Heart left ventricle (tissue), 16 donors: ENCODE measurements at regions of chr7 and their contacts with region 1.

Region 1: GRCh38 chr7:64574540-64575126 is 11.8 kb upstream of the ZNF680 start:
- DNase-seq: peak; percentile 48 to 85 (median 73)
- ATAC-seq: peak; percentile 84 to 95 (median 90)
- H3K4me3 ChIP-seq: peak overlapping the region; percentile 3 to 63 (median 41)
- H3K27ac ChIP-seq: no peak overlapping the region
- H3K4me1 ChIP-seq: peaks cover 0 to 16% (median 3%) of the 10 kb centered on the region in 12 donors
- H3K27me3 ChIP-seq: peaks cover 0 to 7% (median 0%) of the 10 kb centered on the region in 9 donors
- CTCF ChIP-seq: no peak
- POLR2A ChIP-seq: no peak

Region 2: DNA sequence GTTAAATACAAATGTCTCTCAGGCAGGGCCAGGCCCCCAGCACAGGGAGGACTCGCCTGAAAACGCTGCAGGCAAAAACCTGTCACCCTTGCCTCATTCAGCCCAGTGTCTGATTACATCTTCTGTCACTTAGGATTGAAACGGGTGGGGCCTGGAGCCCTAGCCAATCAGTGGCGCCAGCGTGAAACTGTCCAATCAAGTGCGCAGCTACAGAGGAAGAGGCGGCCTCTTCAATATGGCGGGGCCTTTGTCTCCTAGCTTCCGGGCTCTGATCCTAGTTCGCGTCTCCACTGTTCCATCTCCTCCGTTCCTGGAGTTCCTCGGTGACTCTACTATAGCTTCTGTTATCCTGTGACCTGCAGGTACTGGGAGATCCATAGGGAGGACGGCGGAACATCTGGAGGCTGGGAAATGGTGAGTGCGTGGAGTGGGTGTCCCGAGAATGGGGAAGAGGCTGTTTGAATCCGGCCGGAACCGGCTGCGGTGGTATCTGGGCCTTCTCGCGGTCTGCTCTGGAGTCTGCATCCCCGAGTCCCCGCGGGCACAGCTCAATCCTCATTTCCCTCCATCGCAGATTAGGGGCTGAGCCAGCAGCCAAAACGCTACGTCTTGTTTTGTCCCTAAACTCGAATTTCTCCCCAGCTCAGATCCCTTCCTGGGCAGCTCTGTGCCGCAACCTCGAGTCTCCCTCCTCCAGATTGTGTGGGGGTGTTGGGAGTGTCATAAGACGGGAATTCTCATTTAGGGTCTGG is 260.7 kb before region 1 on chr7 and contains the start of gene ZNF736:
- intact Hi-C with region 1: loop called in 4 of 10 experiments (anchors 5 to 10 kb)
- DNase-seq: peak; percentile 89 to 93 (median 92)
- ATAC-seq: peak; percentile 99 to 100 (median 100)
- H3K4me3 ChIP-seq: peak within 1 kb of the TSS; percentile 51 to 89 (median 73)
- H3K27ac ChIP-seq: peak within 1 kb of the TSS in 11 of 12 donors; percentile 24 to 79 (median 58)
- H3K4me1 ChIP-seq: peaks cover 0 to 25% (median 16%) of the 10 kb centered on the region in 12 donors
- H3K27me3 ChIP-seq: no peaks in the 10 kb centered on the region
- CTCF ChIP-seq: no peak
- POLR2A ChIP-seq: peak in 1 of 2 donors; percentile 61
- total RNA-seq, gene ZNF736: 2.5 to 9.0 (median 3.9) TPM

Region 3: GRCh38 chr7:64320547-64321513 is 253.8 kb before region 1 on chr7:
- intact Hi-C with region 1: loop called in 2 of 10 experiments (anchors 5 to 10 kb)
- DNase-seq: no peak
- ATAC-seq: peak in 3 of 4 donors; percentile 67 to 75 (median 67)
- H3K4me3 ChIP-seq: no peak overlapping the region
- H3K27ac ChIP-seq: no peak overlapping the region
- H3K4me1 ChIP-seq: peaks cover 0 to 3% (median 0%) of the 10 kb centered on the region in 12 donors
- H3K27me3 ChIP-seq: no peaks in the 10 kb centered on the region
- CTCF ChIP-seq: peak in 6 of 12 donors; percentile 10 to 41 (median 24)
- POLR2A ChIP-seq: no peak

Region 4: GRCh38 chr7:64463636-64464378 is 110.8 kb before region 1 on chr7:
- intact Hi-C with region 1: loop called in 1 of 10 experiments (anchors 5 kb)
- DNase-seq: peak; percentile 77 to 91 (median 86)
- ATAC-seq: peak; percentile 99 to 100 (median 100)
- H3K4me3 ChIP-seq: peak overlapping the region; percentile 29 to 74 (median 58)
- H3K27ac ChIP-seq: peak overlapping the region in 2 of 12 donors; percentile 35 to 49
- H3K4me1 ChIP-seq: peaks cover 0 to 4% (median 0%) of the 10 kb centered on the region in 12 donors
- H3K27me3 ChIP-seq: no peaks in the 10 kb centered on the region
- CTCF ChIP-seq: no peak
- POLR2A ChIP-seq: no peak

Region 5: GRCh38 chr7:64665980-64666662 is 91.5 kb after region 1 on chr7 and contains the start of gene ZNF107:
- intact Hi-C with region 1: loop called in 3 of 10 experiments (anchors 10 kb)
- DNase-seq: peak; percentile 93 to 96 (median 94)
- ATAC-seq: peak; percentile 100
- H3K4me3 ChIP-seq: peak within 1 kb of the TSS; percentile 53 to 93 (median 74)
- H3K27ac ChIP-seq: peak within 1 kb of the TSS in 10 of 12 donors; percentile 62 to 78 (median 68)
- H3K4me1 ChIP-seq: peaks cover 0 to 16% (median 9%) of the 10 kb centered on the region in 12 donors
- H3K27me3 ChIP-seq: no peaks in the 10 kb centered on the region
- CTCF ChIP-seq: no peak
- POLR2A ChIP-seq: peak in 1 of 2 donors; percentile 52
- total RNA-seq, gene ZNF107: 1.2 to 4.0 (median 1.8) TPM